Gastrocnemius medialis (tissue), 4 donors: ENCODE measurements at regions of chr16 and their contacts with region 1.

Region 1: DNA sequence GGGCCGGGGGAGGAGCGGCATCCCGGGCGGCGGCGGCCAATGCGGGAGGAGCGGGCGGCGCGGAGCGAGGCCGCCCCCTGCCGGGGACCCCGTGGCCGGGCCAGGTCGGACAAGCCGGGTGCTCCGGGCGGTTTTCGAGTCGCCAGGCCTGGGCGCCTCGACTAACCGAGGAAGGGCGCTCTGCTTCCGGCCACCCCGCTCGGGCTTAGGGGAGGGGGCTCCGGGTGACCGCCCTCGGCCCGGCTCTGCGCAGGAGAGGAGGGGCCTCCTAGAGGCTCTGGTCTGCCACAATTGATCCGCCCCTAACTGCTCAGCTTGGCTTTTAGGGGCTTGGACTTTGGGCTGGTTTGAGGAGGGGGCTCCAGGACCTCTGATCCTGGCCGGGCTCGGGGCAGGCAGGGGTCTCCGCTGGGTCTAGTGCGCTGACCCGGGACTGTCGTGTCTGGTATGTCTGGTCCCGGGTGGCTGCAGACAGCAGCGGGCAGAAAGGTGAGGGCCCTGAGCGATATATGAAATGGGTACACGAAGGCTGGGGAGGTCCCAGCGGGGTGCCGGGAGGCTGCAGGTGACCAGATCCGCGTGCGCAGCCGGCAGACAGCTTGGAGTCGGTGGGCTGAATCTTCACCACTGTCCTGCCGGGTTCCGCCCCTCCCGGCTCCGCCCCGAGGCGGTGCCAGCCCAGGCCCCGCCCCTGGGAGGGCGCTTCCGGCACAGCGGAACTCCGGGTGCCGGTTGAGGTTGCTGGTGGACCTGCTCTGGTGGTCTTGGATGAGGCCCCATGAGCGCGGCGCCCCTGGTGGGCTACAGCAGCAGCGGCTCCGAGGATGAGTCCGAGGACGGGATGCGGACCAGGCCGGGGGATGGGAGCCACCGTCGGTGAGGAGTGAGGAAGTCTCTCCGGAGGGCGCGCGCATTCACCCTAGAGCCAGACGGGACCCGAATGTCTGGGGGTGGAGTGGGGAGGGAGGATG is at the start of gene USB1:
- DNase-seq: peak; percentile 76 to 79
- ATAC-seq: peak; percentile 86 to 90
- H3K4me3 ChIP-seq: peak within 1 kb of the TSS; percentile 69 to 88 (median 78)
- H3K27ac ChIP-seq: peak within 1 kb of the TSS; percentile 97 to 99 (median 98)
- H3K4me1 ChIP-seq: peaks cover 19 to 21% of the 10 kb centered on the region in 2 donors
- H3K27me3 ChIP-seq: no peaks in the 10 kb centered on the region
- CTCF ChIP-seq: peak; percentile 57 to 94 (median 69)
- POLR2A ChIP-seq: peak; percentile 76 to 82
- total RNA-seq, gene USB1: 5.7 to 31.2 (median 15.9) TPM

Region 2: DNA sequence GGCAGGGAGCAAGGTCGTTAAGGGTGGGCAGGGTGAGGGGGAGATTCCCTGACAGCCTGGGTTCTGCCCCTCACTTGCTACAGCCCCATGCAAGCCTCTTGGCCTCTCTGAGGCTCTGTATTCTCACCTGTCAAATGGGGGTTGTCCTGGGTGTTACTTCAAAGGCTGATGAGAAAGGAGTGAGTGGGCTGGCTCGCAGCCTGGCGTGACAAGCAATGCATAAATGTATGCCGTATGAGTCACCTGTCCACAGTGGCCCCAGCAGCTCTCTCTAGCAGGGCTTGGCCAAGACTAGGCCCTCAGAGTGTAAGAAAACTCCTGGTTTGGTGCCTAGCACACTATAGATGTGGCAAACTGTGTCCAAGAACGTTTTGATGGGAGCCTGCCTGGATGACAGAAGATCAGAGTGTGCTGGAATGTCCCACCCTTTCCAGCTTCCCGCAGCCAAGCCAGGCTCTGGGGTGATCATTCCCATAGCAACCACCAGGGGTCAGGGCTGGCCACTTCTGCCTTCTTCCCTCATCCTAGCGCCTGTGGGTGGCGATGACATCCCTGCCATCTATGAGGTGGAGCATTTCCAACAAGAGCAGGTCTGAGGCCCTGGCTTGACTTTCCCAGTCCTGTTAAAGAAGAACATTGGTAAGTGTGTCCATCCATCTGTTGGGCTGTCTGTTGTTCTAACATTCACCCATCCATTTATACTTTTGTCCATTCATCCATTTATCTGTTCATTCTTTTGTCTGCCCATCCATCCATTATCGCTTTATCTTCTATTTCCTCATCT is 409.7 kb before region 1 on chr16:
- in situ Hi-C with region 1: no loop called
- intact Hi-C with region 1: loop called (anchors 10 kb)
- DNase-seq: no peak
- ATAC-seq: peak; percentile 45 to 64
- H3K4me3 ChIP-seq: no peak overlapping the region
- H3K27ac ChIP-seq: no peak overlapping the region
- H3K4me1 ChIP-seq: no peaks in the 10 kb centered on the region
- H3K27me3 ChIP-seq: peaks cover 0 to 4% (median 0%) of the 10 kb centered on the region in 3 donors
- CTCF ChIP-seq: peak; percentile 26 to 77 (median 66)
- POLR2A ChIP-seq: no peak

Region 3: GRCh38 chr16:57757326-57757786 is 243.6 kb before region 1 on chr16:
- in situ Hi-C with region 1: loop called in 2 of 4 experiments (anchors 10 to 25 kb)
- intact Hi-C with region 1: loop called (anchors 2 kb)
- DNase-seq: peak; percentile 65 to 76
- ATAC-seq: peak; percentile 89 to 96
- H3K4me3 ChIP-seq: no peak overlapping the region
- H3K27ac ChIP-seq: peak overlapping the region in 2 of 4 donors; percentile 13 to 46
- H3K4me1 ChIP-seq: no peaks in the 10 kb centered on the region
- H3K27me3 ChIP-seq: no peaks in the 10 kb centered on the region
- CTCF ChIP-seq: peak; percentile 89 to 98 (median 93)
- POLR2A ChIP-seq: no peak

Region 4: DNA sequence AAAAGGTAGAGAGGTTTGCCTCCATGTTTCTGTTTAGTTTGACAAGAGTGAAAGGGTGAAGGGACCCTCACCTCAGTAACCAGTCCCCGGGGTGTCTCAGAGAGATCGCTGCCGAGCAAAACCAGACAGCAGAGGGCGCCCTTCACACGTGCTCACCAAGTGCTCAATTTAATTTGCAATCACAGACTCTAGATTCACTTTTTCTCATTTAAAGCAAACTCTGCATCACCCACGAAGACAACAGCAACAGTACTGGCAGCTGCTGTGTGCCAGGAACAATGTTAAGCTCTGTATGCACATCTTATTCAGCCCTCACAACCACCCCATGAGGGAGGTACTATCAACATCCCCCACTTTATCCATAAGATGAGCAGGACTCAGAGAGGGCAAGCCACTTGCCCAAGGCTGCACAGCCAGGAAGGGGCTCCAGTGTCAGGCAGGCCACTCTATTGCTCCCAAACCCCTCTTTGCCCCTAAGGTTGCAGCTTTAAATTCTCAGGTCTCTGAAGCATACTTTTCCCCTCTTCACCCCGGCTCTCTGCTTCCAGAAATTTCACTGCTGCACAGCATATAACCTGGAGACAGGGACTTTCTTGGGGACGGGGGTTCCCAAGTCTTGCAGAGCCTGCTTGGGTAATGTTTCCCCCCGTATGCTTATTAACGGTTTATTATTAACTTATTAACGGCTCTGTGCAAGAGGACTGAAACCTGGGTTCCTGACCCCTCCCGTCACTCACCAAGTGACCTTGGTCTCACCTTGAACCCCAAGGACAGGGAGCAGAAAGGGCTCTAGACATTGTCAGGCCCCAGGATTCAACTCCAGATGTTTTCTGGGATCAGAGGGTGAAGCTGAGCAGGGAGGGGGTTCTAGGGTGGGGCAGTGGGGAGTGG is 101.0 kb before region 1 on chr16:
- in situ Hi-C with region 1: loop called in 3 of 4 experiments (anchors 5 to 10 kb)
- intact Hi-C with region 1: loop called (anchors 1 kb)
- DNase-seq: peak in 1 of 2 donors; percentile 27
- ATAC-seq: peak in 1 of 2 donors; percentile 68
- H3K4me3 ChIP-seq: no peak overlapping the region
- H3K27ac ChIP-seq: no peak overlapping the region
- H3K4me1 ChIP-seq: no peaks in the 10 kb centered on the region
- H3K27me3 ChIP-seq: peaks cover 0 to 16% (median 3%) of the 10 kb centered on the region in 3 donors
- CTCF ChIP-seq: peak; percentile 65 to 84 (median 77)
- POLR2A ChIP-seq: no peak